Astrocyte of the cerebellum (primary cell): ENCODE measurements at regions of chr19 and their contacts with region 1.

Region 1: GRCh38 chr19:31074199-31075135 is 274.8 kb downstream of the TSHZ3 start:
- DNase-seq: no peak
- H3K4me3 ChIP-seq: no peak overlapping the region
- CTCF ChIP-seq: no peak

Region 2: GRCh38 chr19:31132753-31133110 is 58.3 kb after region 1 on chr19:
- in situ Hi-C with region 1: loop called (anchors 5 kb)
- DNase-seq: no peak
- H3K4me3 ChIP-seq: no peak overlapping the region
- CTCF ChIP-seq: no peak

Region 3: GRCh38 chr19:31235806-31236205 is 161.3 kb after region 1 on chr19:
- in situ Hi-C with region 1: no loop called
- DNase-seq: no peak
- H3K4me3 ChIP-seq: no peak overlapping the region
- CTCF ChIP-seq: no peak